Naive thymus-derived CD8-positive, alpha-beta T cell (primary cell): ENCODE measurements at regions of chr18 and their contacts with region 1.

Region 1: DNA sequence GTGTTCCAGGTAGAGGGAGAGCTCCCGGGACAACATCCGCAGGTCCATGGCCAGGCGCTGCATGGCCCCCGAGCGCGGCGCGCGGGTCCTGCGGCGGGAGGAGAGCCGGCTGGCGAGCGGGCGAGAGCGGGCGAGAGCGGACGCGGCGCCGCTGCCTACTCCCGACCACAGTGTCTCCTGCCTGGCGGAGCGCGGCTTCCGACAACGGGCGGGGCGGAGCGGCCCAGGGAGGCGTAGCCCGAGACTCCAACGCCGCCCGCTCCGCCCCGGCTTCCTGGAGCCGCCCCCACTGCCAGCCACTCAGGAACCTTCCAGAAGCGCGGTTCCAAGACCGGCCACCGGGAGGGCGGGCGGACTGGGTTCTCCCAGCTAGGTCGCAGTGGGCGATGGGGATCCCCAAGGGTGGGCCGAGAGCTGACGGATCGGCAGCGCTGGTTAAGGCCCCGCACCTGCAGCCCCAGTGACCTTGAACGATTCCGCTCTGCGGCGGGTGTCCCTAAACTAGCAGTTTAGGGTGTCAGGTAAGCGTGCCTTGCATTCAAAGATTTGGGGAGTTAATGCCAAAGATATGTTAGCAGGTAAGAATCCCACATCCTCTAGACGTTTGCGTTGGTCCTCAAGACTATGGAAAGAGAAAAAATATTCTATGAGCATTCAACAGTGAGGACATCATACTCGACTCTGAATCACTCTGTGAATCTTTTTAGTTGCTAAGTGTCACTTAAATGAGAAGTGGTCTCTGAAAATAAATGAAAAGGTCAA is at the start of gene ABHD3:
- DNase-seq: peak; percentile 87 to 93 (median 89)
- ATAC-seq: peak; percentile 91 to 93
- H3K4me3 Mint-ChIP-seq: peak within 1 kb of the TSS; percentile 90 to 100 (median 97)
- H3K27ac Mint-ChIP-seq: peak within 1 kb of the TSS; percentile 89 to 96 (median 94)
- H3K4me1 Mint-ChIP-seq: peaks cover 11 to 41% (median 38%) of the 10 kb centered on the region in 4 donors
- H3K27me3 Mint-ChIP-seq: no peaks in the 10 kb centered on the region
- polyA plus RNA-seq, gene ABHD3: 16.2 to 20.7 (median 19.7) TPM

Region 2: GRCh38 chr18:21682371-21683051 is 22.3 kb before region 1 on chr18:
- POLR2A ChIA-PET with region 1: interaction called, 35 read pairs
- DNase-seq: peak in 6 of 10 donors; percentile 9 to 55 (median 38)
- ATAC-seq: peak; percentile 91 to 92
- H3K4me3 Mint-ChIP-seq: no peak overlapping the region
- H3K27ac Mint-ChIP-seq: no peak overlapping the region
- H3K4me1 Mint-ChIP-seq: peaks cover 1 to 29% (median 13%) of the 10 kb centered on the region in 4 donors
- H3K27me3 Mint-ChIP-seq: no peaks in the 10 kb centered on the region

Region 3: DNA sequence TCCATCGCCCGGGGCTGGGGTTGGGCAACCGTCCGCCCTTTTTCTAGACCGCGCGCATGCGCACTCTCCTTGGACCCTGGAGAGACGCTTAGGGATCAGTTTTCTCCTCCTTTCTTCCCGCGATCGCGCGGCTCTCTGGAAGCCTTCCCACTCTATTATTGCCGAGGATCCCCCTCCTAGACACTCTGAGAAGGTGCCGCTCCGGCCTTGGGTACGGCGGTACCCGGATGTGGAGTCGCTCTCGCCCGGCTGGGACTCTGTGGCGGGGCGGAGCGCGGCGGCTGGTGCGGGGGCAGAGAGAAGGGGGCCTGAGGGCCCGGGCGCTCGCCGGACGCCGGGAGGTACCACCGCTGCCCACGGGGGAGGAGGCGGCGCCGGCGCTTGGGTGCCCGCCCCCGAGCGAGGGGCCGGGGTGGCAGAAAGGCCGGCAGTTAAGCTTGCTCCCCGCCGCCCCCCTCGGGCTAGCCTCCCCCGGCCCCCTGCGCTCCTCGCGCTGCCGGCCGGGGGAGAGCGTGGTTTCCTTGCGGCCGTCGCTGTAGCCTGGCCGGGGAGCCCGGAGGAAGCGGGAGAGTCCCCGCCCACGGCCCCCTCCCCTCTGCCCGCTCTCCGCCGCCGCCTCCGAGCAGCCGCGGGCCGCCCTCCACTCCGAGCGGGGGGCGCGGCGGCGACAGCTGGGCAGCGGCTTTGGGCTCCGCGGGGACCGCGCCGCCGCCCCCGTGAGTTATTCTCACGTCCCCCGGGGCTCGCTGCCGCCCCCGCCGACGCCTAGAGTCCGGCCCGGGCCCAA is 36.1 kb after region 1 on chr18 and contains the start of gene MIB1:
- POLR2A ChIA-PET with region 1: interaction called, 29 read pairs
- DNase-seq: peak; percentile 23 to 99 (median 99)
- ATAC-seq: peak; percentile 18 to 68
- H3K4me3 Mint-ChIP-seq: peak within 1 kb of the TSS; percentile 92 to 97 (median 94)
- H3K27ac Mint-ChIP-seq: peak within 1 kb of the TSS; percentile 67 to 98 (median 96)
- H3K4me1 Mint-ChIP-seq: peaks cover 16 to 51% (median 42%) of the 10 kb centered on the region in 4 donors
- H3K27me3 Mint-ChIP-seq: peaks cover 0 to 8% (median 0%) of the 10 kb centered on the region in 5 donors
- polyA plus RNA-seq, gene MIB1: 3.8 to 7.1 (median 3.9) TPM